Mammary epithelial cell (primary cell): ENCODE measurements at regions of chr6 and their contacts with region 1.

Region 1: DNA sequence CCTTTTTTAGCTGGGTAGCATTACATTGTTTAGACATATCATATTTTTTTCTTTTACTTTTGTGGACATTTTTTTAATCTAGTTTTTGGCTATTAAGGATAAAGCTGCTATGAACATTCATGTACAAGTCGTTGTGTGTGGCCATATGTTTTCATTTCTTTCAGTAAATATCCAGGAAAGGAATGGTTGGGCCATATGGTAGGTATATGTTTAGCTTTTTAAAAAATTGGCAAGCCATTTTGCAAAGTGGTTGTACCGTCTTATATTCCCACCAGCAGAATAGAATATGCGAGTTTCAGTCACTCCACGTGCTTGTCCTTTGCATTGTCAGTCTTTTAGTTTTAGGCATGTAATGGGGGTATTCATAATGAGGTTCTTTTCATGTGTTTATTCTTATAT is 106.3 kb upstream of the NOX3 start:
- DNase-seq: no peak
- H3K4me3 ChIP-seq: no peak overlapping the region
- H3K27ac ChIP-seq: no peak overlapping the region
- H3K4me1 ChIP-seq: no peaks in the 10 kb centered on the region
- H3K27me3 ChIP-seq: no peaks in the 10 kb centered on the region
- CTCF ChIP-seq: no peak

Region 2: DNA sequence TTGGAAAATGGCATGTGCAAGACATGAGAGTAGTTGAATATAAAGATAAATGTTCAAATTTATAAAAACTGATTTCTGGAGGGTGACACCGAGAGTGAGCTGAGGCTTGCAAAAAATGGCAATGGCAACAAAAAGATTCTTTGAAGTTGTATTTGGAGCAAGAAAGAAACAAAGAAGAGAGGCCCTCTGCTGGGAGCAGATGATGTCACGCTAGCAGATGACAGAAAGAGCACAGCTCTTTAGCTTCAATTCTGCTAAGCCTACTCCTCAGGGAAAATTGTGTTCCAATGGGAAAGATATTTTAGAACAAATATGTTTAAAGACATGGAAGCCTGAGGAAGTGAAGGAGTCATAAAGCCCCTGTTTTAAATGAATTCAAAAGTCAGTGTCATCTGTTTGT is 18.9 kb after region 1 on chr6:
- CTCF ChIA-PET with region 1: no interaction called
- dilution Hi-C with region 1: no loop called
- in situ Hi-C with region 1: no loop called
- intact Hi-C with region 1: loop called (anchors 2 kb)
- DNase-seq: no peak
- H3K4me3 ChIP-seq: no peak overlapping the region
- H3K27ac ChIP-seq: no peak overlapping the region
- H3K4me1 ChIP-seq: no peaks in the 10 kb centered on the region
- H3K27me3 ChIP-seq: peaks cover 2% of the 10 kb centered on the region
- CTCF ChIP-seq: no peak

Region 3: GRCh38 chr6:155959898-155960495 is 398.0 kb after region 1 on chr6:
- CTCF ChIA-PET with region 1: no interaction called
- dilution Hi-C with region 1: no loop called
- in situ Hi-C with region 1: no loop called
- intact Hi-C with region 1: no loop called
- DNase-seq: no peak
- H3K4me3 ChIP-seq: no peak overlapping the region
- H3K27ac ChIP-seq: no peak overlapping the region
- H3K4me1 ChIP-seq: no peaks in the 10 kb centered on the region
- H3K27me3 ChIP-seq: no peaks in the 10 kb centered on the region
- CTCF ChIP-seq: no peak